Panc1 (cell line): ENCODE measurements at regions of chr3 and their contacts with region 1.

Region 1: GRCh38 chr3:172315401-172316091 is 132.7 kb downstream of the GHSR start:
- DNase-seq: no peak
- ATAC-seq: no peak
- H3K4me3 ChIP-seq: no peak overlapping the region
- H3K27ac ChIP-seq: no peak overlapping the region
- H3K4me1 ChIP-seq: no peaks in the 10 kb centered on the region
- H3K27me3 ChIP-seq: no peaks in the 10 kb centered on the region
- CTCF ChIP-seq: no peak

Region 2: DNA sequence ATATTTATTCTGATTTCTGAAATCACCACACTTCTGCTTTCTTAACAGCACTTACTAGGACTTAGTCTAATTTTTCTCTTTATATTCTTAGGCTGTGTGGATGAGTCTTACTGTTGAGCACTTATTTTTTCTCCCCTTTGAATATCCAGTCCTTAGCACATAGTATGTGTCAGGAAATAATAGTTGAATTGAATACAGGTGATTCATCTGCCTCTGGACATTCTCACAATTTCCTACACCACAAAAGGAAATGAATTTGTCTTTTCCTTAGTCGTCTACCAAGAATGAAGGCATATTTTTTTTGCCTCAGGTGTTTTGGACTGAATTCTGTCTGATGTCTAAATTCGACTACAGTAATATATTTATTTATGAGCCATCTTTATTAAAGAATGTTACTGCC is 71.5 kb before region 1 on chr3:
- CTCF ChIA-PET with region 1: no interaction called
- POLR2A ChIA-PET with region 1: interaction called, 13 read pairs
- in situ Hi-C with region 1: no loop called
- intact Hi-C with region 1: no loop called
- DNase-seq: peak; percentile 15
- ATAC-seq: peak; percentile 65; the same call in 1 of the 2 replicates
- H3K4me3 ChIP-seq: no peak overlapping the region
- H3K27ac ChIP-seq: no peak overlapping the region
- H3K4me1 ChIP-seq: no peaks in the 10 kb centered on the region; the same call in 1 of the 2 replicates
- H3K27me3 ChIP-seq: no peaks in the 10 kb centered on the region
- CTCF ChIP-seq: no peak